Activated CD4-positive, alpha-beta T cell treated with anti-CD3 and anti-CD28 coated beads for 36 hours (primary cell): ENCODE measurements at regions of chr1 and their contacts with region 1.

Region 1: GRCh38 chr1:21200767-21201166 is 24.1 kb upstream of the EIF4G3 start:
- DNase-seq: no peak
- ATAC-seq: no peak
- H3K4me3 Mint-ChIP-seq: no peak overlapping the region
- H3K27ac Mint-ChIP-seq: no peak overlapping the region
- H3K4me1 Mint-ChIP-seq: no peaks in the 10 kb centered on the region
- H3K27me3 Mint-ChIP-seq: peaks cover 8% of the 10 kb centered on the region

Region 2: GRCh38 chr1:20521960-20522861 is 678.6 kb before region 1 on chr1:
- CTCF ChIA-PET with region 1: no interaction called
- POLR2A ChIA-PET with region 1: no interaction called
- intact Hi-C with region 1: loop called in 1 of 2 experiments (anchors 2 kb)
- DNase-seq: peak; percentile 82
- ATAC-seq: no peak
- H3K4me3 Mint-ChIP-seq: no peak overlapping the region
- H3K27ac Mint-ChIP-seq: no peak overlapping the region
- H3K4me1 Mint-ChIP-seq: no peaks in the 10 kb centered on the region
- H3K27me3 Mint-ChIP-seq: peaks cover 12% of the 10 kb centered on the region

Region 3: DNA sequence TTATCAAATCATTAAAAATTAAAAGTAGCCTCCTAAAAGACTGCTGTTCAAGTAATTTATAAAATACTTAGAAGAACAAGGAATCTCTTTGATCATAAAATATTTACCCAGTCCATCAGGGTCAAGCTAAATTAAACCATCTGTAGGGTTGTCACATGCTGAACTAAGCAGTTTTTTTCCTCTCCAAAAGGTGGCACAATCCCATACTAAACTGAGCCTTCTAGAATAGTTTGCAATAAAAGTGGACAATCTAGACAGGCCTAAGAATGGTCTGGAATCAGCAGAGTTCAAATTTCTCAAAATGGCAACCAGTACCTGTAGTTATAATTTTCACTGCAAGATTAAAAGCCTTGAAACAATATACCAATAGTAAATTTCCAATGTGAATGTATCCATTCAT is 218.9 kb before region 1 on chr1:
- CTCF ChIA-PET with region 1: no interaction called
- POLR2A ChIA-PET with region 1: no interaction called
- intact Hi-C with region 1: loop called in 1 of 2 experiments (anchors 5 kb)
- DNase-seq: no peak
- ATAC-seq: no peak
- H3K4me3 Mint-ChIP-seq: no peak overlapping the region
- H3K27ac Mint-ChIP-seq: no peak overlapping the region
- H3K4me1 Mint-ChIP-seq: peaks cover 2% of the 10 kb centered on the region
- H3K27me3 Mint-ChIP-seq: no peaks in the 10 kb centered on the region

Region 4: GRCh38 chr1:21184276-21184675 is 16.5 kb before region 1 on chr1:
- CTCF ChIA-PET with region 1: interaction called, 23 read pairs
- POLR2A ChIA-PET with region 1: no interaction called
- intact Hi-C with region 1: no loop called
- DNase-seq: no peak
- ATAC-seq: no peak
- H3K4me3 Mint-ChIP-seq: no peak overlapping the region
- H3K27ac Mint-ChIP-seq: no peak overlapping the region
- H3K4me1 Mint-ChIP-seq: no peaks in the 10 kb centered on the region
- H3K27me3 Mint-ChIP-seq: no peaks in the 10 kb centered on the region

Region 5: DNA sequence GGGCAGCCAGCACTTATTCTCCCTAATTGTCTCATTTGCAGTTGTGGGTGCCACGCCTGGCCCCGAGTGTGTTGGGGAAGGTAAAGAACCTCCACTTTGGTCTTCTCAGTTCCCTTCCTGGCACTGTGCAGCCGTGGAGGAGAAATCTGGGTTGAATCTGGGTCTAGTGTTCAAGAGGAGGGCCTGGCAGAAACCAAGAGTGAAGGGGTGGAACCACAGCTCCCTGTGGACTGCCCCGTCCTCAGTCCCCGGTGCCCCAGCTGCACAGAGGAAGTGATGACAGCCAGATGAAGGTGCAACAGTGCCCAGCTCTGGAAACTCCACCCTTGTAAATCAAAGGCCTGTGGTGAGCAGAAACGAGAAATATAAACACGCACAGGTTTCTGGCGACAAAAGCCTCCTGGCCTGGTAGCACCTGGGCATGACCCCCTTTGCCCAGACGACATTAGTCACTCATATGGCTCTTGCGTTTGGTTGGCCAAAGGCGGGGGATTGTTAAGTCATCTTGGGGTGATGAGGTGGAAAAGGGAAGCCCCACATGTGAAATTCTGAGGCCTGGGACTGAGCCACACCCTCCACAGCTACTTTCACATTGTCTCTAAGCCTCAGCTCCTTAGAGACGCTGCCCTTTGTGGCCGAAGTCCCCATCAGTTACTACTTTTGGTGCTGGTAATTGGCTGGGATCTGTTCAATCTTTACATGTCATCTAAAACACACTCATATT is 93.7 kb after region 1 on chr1:
- CTCF ChIA-PET with region 1: no interaction called
- POLR2A ChIA-PET with region 1: no interaction called
- intact Hi-C with region 1: no loop called
- DNase-seq: peak; percentile 93
- ATAC-seq: peak; percentile 61
- H3K4me3 Mint-ChIP-seq: peak overlapping the region; percentile 86
- H3K27ac Mint-ChIP-seq: peak overlapping the region; percentile 97
- H3K4me1 Mint-ChIP-seq: peaks cover 86% of the 10 kb centered on the region
- H3K27me3 Mint-ChIP-seq: no peaks in the 10 kb centered on the region